Caco-2 (cell line): ENCODE measurements at regions of chr2 and their contacts with region 1.

Region 1: DNA sequence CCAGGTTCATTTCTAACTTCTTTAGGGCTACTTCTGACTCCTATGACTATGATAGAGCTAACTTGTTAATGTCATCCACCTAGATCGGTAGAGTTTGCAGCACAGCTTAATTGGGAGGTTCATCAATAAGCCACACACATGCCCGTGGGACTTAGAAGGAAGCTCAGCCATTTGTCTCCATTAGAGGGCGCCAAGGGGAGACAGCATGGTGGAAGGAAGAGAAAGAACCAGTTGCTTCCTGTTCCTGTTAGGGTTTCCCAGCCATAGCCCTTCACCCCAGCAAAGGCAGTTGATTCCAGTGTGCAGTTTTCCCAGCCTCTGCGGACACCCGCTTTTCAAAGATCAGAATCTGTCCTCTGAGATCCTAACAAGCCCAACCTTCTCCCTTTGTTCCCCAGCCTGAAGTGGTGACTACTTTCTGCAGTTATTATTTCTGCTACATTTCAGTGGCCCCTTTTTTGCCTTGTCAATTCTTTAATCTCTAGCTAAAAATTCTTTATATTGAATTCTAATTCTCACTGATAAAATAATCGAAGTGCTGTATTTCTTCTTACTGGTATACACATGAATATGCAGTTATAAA is 30.3 kb downstream of the MAIP1 start:
- DNase-seq: peak; percentile 82 to 83
- H3K4me3 ChIP-seq: no peak overlapping the region
- H3K4me3 Mint-ChIP-seq: no peak overlapping the region
- H3K27ac Mint-ChIP-seq: no peak overlapping the region
- H3K4me1 ChIP-seq: peaks cover 27% of the 10 kb centered on the region
- H3K4me1 Mint-ChIP-seq: peaks cover 6% of the 10 kb centered on the region
- H3K27me3 ChIP-seq: no peaks in the 10 kb centered on the region
- H3K27me3 Mint-ChIP-seq: no peaks in the 10 kb centered on the region
- CTCF ChIP-seq: peak; percentile 64 to 75

Region 2: GRCh38 chr2:199791326-199791725 is 194.4 kb before region 1 on chr2:
- CTCF ChIA-PET with region 1: no interaction called
- POLR2A ChIA-PET with region 1: no interaction called
- intact Hi-C with region 1: no loop called
- DNase-seq: no peak
- H3K4me3 ChIP-seq: no peak overlapping the region
- H3K4me3 Mint-ChIP-seq: no peak overlapping the region
- H3K27ac Mint-ChIP-seq: no peak overlapping the region
- H3K4me1 ChIP-seq: no peaks in the 10 kb centered on the region
- H3K4me1 Mint-ChIP-seq: no peaks in the 10 kb centered on the region
- H3K27me3 ChIP-seq: no peaks in the 10 kb centered on the region
- H3K27me3 Mint-ChIP-seq: peaks cover 9% of the 10 kb centered on the region
- CTCF ChIP-seq: no peak

Region 3: DNA sequence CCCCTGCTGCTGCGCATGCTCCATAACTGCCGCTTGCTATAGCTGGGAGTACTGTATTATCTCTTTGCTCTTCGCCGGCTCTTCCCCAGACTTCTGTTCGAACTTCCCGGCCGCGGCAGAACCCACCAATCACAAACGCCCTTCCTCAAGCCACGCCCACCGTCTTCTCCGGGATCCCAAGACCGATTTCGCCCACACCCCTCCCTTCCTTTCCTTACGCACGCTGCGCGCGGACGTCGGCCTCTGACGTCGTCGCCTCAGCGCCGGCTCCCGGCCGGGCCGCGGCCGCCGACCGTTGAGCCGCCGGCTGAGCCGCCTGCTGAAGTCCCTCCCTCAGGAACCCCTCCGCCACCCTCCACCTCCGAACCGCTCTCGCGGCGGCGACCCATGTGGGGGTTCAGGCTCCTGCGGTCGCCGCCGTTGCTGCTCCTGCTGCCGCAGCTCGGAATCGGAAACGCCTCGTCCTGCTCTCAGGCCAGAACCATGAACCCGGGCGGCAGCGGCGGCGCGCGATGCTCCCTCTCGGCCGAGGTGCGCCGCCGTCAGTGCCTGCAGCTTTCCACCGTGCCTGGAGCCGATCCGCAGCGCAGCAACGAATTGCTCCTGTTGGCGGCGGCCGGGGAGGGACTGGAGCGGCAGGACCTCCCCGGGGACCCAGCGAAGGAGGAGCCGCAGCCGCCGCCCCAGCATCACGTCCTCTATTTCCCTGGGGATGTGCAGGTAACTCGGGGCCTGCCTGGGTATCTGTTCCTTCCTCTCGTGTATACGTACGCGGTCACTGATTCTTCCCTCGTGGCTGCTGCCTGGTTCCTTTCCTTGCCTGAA is 74.5 kb before region 1 on chr2 and contains the start of gene C2orf69:
- CTCF ChIA-PET with region 1: no interaction called
- POLR2A ChIA-PET with region 1: no interaction called
- intact Hi-C with region 1: no loop called
- DNase-seq: peak; percentile 99
- H3K4me3 ChIP-seq: peak within 1 kb of the TSS; percentile 54
- H3K4me3 Mint-ChIP-seq: peak within 1 kb of the TSS; percentile 93
- H3K27ac Mint-ChIP-seq: peak within 1 kb of the TSS; percentile 96
- H3K4me1 ChIP-seq: peaks cover 12% of the 10 kb centered on the region
- H3K4me1 Mint-ChIP-seq: peaks cover 23% of the 10 kb centered on the region
- H3K27me3 ChIP-seq: no peaks in the 10 kb centered on the region
- H3K27me3 Mint-ChIP-seq: no peaks in the 10 kb centered on the region
- CTCF ChIP-seq: no peak
- total RNA-seq, gene C2orf69: 16.6 and 17.1 TPM in 2 replicates

Region 4: GRCh38 chr2:200092235-200092634 is 106.5 kb after region 1 on chr2:
- CTCF ChIA-PET with region 1: no interaction called
- POLR2A ChIA-PET with region 1: no interaction called
- intact Hi-C with region 1: loop called (anchors 5 kb)
- DNase-seq: peak; percentile 67
- H3K4me3 ChIP-seq: no peak overlapping the region
- H3K4me3 Mint-ChIP-seq: peak overlapping the region; percentile 3
- H3K27ac Mint-ChIP-seq: no peak overlapping the region
- H3K4me1 ChIP-seq: peaks cover 57% of the 10 kb centered on the region
- H3K4me1 Mint-ChIP-seq: peaks cover 32% of the 10 kb centered on the region
- H3K27me3 ChIP-seq: no peaks in the 10 kb centered on the region
- H3K27me3 Mint-ChIP-seq: no peaks in the 10 kb centered on the region
- CTCF ChIP-seq: no peak